T-cell (primary cell): ENCODE measurements at regions of chr3 and their contacts with region 1.

Region 1: GRCh38 chr3:98022978-98023820 is 11.9 kb downstream of the GABRR3 start:
- DNase-seq: peak; percentile 61 to 96 (median 86)
- ATAC-seq: peak; percentile 50 to 87 (median 78)
- H3K4me3 ChIP-seq: no peak overlapping the region
- H3K4me3 Mint-ChIP-seq: no peak overlapping the region
- H3K27ac ChIP-seq: no peak overlapping the region
- H3K27ac Mint-ChIP-seq: peak overlapping the region in 1 of 2 donors; percentile 7
- H3K4me1 ChIP-seq: no peaks in the 10 kb centered on the region
- H3K4me1 Mint-ChIP-seq: peaks cover 6 to 8% (median 6%) of the 10 kb centered on the region in 3 donors
- H3K27me3 ChIP-seq: peaks cover 0 to 3% of the 10 kb centered on the region in 2 experiments
- H3K27me3 Mint-ChIP-seq: no peaks in the 10 kb centered on the region

Region 2: GRCh38 chr3:97793420-97794019 is 229.7 kb before region 1 on chr3:
- CTCF ChIA-PET with region 1: interaction called, 42 to 48 read pairs
- POLR2A ChIA-PET with region 1: no interaction called
- DNase-seq: peak in 9 of 35 experiments; percentile 4 to 81 (median 11)
- ATAC-seq: peak; percentile 53 to 57 (median 56)
- H3K4me3 ChIP-seq: no peak overlapping the region
- H3K4me3 Mint-ChIP-seq: no peak overlapping the region
- H3K27ac ChIP-seq: no peak overlapping the region
- H3K27ac Mint-ChIP-seq: no peak overlapping the region
- H3K4me1 ChIP-seq: no peaks in the 10 kb centered on the region
- H3K4me1 Mint-ChIP-seq: no peaks in the 10 kb centered on the region
- H3K27me3 ChIP-seq: no peaks in the 10 kb centered on the region
- H3K27me3 Mint-ChIP-seq: no peaks in the 10 kb centered on the region

Region 3: GRCh38 chr3:97804471-97804870 is 218.7 kb before region 1 on chr3:
- CTCF ChIA-PET with region 1: interaction called, 12 to 23 read pairs
- POLR2A ChIA-PET with region 1: no interaction called
- DNase-seq: no peak
- ATAC-seq: no peak
- H3K4me3 ChIP-seq: no peak overlapping the region
- H3K4me3 Mint-ChIP-seq: no peak overlapping the region
- H3K27ac ChIP-seq: no peak overlapping the region
- H3K27ac Mint-ChIP-seq: no peak overlapping the region
- H3K4me1 ChIP-seq: no peaks in the 10 kb centered on the region
- H3K4me1 Mint-ChIP-seq: no peaks in the 10 kb centered on the region
- H3K27me3 ChIP-seq: peaks cover 0 to 2% of the 10 kb centered on the region in 2 experiments
- H3K27me3 Mint-ChIP-seq: no peaks in the 10 kb centered on the region